Right lobe of liver (tissue), 6 donors: ENCODE measurements at regions of chr11 and their contacts with region 1.

Region 1: DNA sequence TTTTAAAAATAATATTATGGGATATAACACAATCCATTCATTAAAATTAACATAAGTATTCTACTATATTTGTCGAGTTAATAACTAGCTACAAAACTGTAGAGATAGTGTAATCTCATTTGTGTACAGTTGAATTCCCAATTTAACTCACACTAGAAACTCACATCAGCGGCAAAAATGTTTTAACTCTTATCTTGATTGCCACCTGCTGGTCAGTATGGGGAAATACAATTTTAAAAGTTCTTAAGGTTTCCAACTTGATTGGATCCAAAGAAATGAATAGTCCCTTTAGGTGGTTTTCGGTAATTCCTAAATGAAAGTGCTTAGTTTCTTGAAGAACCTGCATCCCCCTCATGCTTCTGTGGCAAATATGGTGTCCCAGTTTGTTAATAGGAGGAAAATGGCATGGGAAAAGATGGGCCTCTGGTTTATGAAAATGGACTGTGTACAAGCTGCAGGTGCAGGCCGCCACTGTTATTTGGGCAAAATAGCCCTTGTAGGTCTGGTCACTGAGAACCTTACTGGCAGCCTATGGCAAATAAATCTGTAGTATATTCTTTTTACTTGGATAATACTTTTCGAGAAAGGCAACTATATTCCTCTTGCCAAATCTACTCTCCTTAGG is 33.7 kb upstream of the SLC17A6 start:
- DNase-seq: no peak
- ATAC-seq: peak; percentile 60 to 82 (median 74)
- H3K4me3 ChIP-seq: no peak overlapping the region
- H3K27ac ChIP-seq: no peak overlapping the region
- H3K4me1 ChIP-seq: no peaks in the 10 kb centered on the region
- H3K27me3 ChIP-seq: no peaks in the 10 kb centered on the region
- CTCF ChIP-seq: peak; percentile 69 to 74 (median 70)
- POLR2A ChIP-seq: no peak

Region 2: DNA sequence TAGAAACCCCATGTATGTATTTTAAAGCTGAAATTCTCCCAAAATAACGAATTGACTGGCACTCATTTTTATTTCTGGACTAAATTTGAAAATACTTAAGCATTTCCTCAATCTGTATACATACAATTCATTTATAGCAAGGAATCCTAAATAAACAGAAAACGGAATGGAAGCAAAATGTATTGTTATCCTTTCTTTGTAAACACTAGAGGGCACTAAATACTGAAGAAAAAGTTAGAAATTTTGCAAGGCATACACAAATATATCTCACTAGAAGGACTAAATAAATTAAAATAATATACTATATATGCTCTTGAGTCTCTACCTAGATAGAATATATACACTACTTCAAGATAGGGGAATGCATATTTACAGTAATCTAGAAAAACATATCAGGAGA is 134.6 kb before region 1 on chr11:
- intact Hi-C with region 1: loop called in 1 of 2 experiments (anchors 10 kb)
- DNase-seq: no peak
- ATAC-seq: peak; percentile 28 to 66 (median 54)
- H3K4me3 ChIP-seq: no peak overlapping the region
- H3K27ac ChIP-seq: no peak overlapping the region
- H3K4me1 ChIP-seq: no peaks in the 10 kb centered on the region
- H3K27me3 ChIP-seq: no peaks in the 10 kb centered on the region
- CTCF ChIP-seq: peak; percentile 34 to 55 (median 46)
- POLR2A ChIP-seq: no peak